CD8-positive, alpha-beta T cell (primary cell): ENCODE measurements at regions of chr19 and their contacts with region 1.

Region 1: DNA sequence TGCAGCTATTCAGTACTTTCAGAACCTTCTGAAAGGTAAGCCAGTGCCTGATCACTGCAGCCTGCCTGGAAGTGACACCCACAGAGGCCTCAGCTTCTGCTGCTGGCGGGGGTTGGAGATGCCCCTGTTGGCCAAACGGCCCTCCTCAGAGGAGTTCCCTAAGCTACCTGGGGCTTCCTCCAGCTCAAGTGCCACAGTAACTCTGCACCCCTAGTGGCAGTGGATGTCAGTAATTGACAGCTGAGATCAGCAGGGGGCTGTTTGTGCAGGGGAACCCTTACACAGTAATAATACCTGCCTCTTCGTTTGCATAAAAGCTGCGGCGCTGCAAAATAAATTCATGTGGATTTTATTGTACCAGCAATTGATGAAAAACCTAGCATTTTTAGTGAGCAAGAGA is 28.9 kb downstream of the TDRD12 start:
- DNase-seq: peak in 5 of 9 experiments; percentile 24 to 54 (median 45)
- ATAC-seq: peak; percentile 47
- H3K4me3 ChIP-seq: no peak overlapping the region
- H3K4me3 Mint-ChIP-seq: no peak overlapping the region
- H3K27ac ChIP-seq: no peak overlapping the region
- H3K27ac Mint-ChIP-seq: no peak overlapping the region
- H3K4me1 ChIP-seq: peaks cover 41% of the 10 kb centered on the region
- H3K4me1 Mint-ChIP-seq: peaks cover 28% of the 10 kb centered on the region
- H3K27me3 ChIP-seq: no peaks in the 10 kb centered on the region
- H3K27me3 Mint-ChIP-seq: peaks cover 10% of the 10 kb centered on the region
- CTCF ChIP-seq: peak; percentile 48

Region 2: GRCh38 chr19:32302778-32303177 is 445.7 kb before region 1 on chr19:
- CTCF ChIA-PET with region 1: no interaction called
- POLR2A ChIA-PET with region 1: no interaction called
- intact Hi-C with region 1: no loop called
- DNase-seq: no peak
- ATAC-seq: no peak
- H3K4me3 ChIP-seq: no peak overlapping the region
- H3K4me3 Mint-ChIP-seq: no peak overlapping the region
- H3K27ac ChIP-seq: no peak overlapping the region
- H3K27ac Mint-ChIP-seq: no peak overlapping the region
- H3K4me1 ChIP-seq: no peaks in the 10 kb centered on the region
- H3K4me1 Mint-ChIP-seq: no peaks in the 10 kb centered on the region
- H3K27me3 ChIP-seq: peaks cover 2 to 4% of the 10 kb centered on the region in 2 experiments
- H3K27me3 Mint-ChIP-seq: peaks cover 30% of the 10 kb centered on the region
- CTCF ChIP-seq: no peak

Region 3: DNA sequence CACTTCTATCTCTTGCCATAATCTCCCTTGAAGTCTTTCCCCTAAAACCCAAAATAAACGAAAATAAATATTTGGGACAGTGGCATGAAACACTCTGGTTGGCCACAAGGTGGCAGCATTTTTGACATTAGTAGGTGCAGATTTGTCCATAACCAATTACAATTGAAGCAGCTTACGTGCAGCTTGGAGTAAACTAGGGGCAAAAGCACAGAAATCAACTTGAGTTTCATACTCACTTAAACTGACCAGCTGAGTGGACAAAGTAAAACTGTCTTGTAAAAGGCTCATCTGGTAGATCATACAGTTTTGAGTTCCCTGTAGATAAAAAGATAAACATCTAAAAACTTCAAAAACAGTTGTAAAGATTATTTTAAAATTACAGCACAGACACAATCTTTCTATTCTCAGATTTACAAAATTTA is 148.8 kb before region 1 on chr19:
- CTCF ChIA-PET with region 1: interaction called, 3 read pairs
- POLR2A ChIA-PET with region 1: no interaction called
- intact Hi-C with region 1: loop called in 1 of 2 experiments (anchors 5 kb)
- DNase-seq: peak in 8 of 9 experiments; percentile 22 to 79 (median 54)
- ATAC-seq: peak; percentile 73
- H3K4me3 ChIP-seq: no peak overlapping the region
- H3K4me3 Mint-ChIP-seq: no peak overlapping the region
- H3K27ac ChIP-seq: no peak overlapping the region
- H3K27ac Mint-ChIP-seq: no peak overlapping the region
- H3K4me1 ChIP-seq: no peaks in the 10 kb centered on the region
- H3K4me1 Mint-ChIP-seq: peaks cover 6% of the 10 kb centered on the region
- H3K27me3 ChIP-seq: no peaks in the 10 kb centered on the region
- H3K27me3 Mint-ChIP-seq: no peaks in the 10 kb centered on the region
- CTCF ChIP-seq: peak; percentile 86

Region 4: DNA sequence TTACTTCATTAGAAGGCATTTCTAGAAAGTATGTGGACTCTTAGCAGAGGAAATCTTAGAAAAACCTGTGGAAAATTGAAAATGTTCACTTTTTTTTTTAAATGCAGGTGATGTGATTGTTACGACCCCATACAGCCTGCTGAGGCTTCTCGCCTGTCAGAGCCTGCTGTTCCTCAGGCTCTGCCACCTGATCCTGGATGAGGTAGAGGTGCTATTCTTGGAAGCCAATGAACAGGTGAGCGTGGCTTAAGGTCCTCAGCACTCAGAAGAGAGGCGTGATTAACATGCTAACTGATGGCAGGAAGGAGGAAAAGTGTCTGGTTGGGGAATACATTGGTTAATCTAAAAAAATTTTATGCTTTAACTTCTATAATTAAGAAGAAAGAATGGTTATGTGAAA is 49.7 kb after region 1 on chr19:
- CTCF ChIA-PET with region 1: interaction called, 3 read pairs
- POLR2A ChIA-PET with region 1: no interaction called
- intact Hi-C with region 1: loop called (anchors 1 to 5 kb)
- DNase-seq: no peak
- ATAC-seq: no peak
- H3K4me3 ChIP-seq: no peak overlapping the region
- H3K4me3 Mint-ChIP-seq: no peak overlapping the region
- H3K27ac ChIP-seq: no peak overlapping the region
- H3K27ac Mint-ChIP-seq: no peak overlapping the region
- H3K4me1 ChIP-seq: peaks cover 32% of the 10 kb centered on the region
- H3K4me1 Mint-ChIP-seq: peaks cover 50% of the 10 kb centered on the region
- H3K27me3 ChIP-seq: no peaks in the 10 kb centered on the region
- H3K27me3 Mint-ChIP-seq: no peaks in the 10 kb centered on the region
- CTCF ChIP-seq: no peak